ENCODE measurements at regions of chr7 and their contacts with region 1.

Region 1: DNA sequence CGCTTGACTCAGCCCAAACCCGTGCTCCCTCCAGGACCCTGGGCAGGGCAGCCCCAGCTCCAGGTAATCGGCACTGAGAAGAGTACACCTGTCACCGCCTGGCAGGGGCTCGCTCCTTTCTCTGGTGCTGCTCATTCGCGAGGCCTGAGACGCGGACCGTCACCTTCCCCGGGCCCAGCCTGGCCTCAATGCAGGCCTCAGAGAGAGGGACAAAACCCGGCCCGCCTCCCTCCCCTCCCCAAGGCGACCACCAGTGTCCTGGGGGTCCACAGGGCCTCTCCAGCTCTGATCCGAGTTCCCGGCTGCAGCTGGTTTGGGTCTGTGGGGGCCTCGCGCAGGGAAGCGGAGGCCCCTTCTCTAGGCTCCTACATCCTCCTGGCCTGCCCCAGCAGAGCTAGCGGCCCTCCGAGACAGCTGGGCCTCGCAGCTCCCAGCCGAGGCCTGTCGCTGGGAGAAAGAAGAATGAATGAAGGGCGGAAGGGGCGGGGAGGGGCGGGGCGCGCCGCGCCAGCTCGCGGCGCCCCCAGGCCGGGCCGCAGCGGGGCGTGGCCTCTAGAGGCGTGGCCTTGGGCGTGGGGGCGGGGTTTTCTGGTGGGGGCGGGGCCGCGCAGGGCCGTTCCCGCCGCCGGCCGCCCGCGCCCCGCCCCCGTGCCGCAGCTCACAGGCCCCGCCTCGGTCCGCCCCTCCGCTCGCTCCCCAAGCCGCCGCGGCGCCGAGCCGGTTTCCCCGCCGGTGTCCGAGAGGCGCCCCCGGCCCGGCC is at the start of gene LIMK1:
- DNase-seq: peak; percentile 74 to 87
- ATAC-seq: peak; percentile 84 to 97 (median 92)
- H3K4me3 ChIP-seq: peak within 1 kb of the TSS; percentile 50 to 95 (median 76)
- H3K27ac ChIP-seq: peak within 1 kb of the TSS in 7 of 10 donors; percentile 23 to 85 (median 56)
- H3K4me1 ChIP-seq: peaks cover 6 to 23% (median 20%) of the 10 kb centered on the region in 9 donors
- H3K27me3 ChIP-seq: no peaks in the 10 kb centered on the region
- CTCF ChIP-seq: no peak
- total RNA-seq, gene LIMK1: 6.1 to 17.3 (median 9.9) TPM

Region 2: DNA sequence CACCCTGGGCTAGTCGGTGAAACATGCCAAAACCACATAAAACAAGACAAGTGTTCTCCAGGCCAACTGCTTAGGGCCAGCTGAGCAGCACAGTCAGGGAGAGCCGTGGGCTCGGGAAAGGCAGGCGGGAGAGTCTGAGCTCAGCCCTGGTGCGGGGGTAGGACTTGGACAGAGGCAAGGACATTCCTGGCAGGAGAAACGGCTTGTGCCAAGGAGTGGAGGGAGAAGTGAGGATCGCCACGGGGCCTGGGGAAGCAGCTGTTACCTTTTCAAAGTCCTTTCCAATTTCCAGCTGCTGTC is 51.2 kb before region 1 on chr7:
- intact Hi-C with region 1: loop called in 1 of 10 experiments (anchors 5 kb)
- DNase-seq: no peak
- ATAC-seq: peak in 5 of 8 donors; percentile 3 to 26 (median 24)
- H3K4me3 ChIP-seq: peak overlapping the region in 2 of 10 donors; percentile 10 to 14
- H3K27ac ChIP-seq: peak overlapping the region in 8 of 10 donors; percentile 57 to 92 (median 82)
- H3K4me1 ChIP-seq: peaks cover 15 to 85% (median 38%) of the 10 kb centered on the region in 9 donors
- H3K27me3 ChIP-seq: peaks cover 0 to 37% (median 4%) of the 10 kb centered on the region in 7 donors
- CTCF ChIP-seq: no peak

Region 3: DNA sequence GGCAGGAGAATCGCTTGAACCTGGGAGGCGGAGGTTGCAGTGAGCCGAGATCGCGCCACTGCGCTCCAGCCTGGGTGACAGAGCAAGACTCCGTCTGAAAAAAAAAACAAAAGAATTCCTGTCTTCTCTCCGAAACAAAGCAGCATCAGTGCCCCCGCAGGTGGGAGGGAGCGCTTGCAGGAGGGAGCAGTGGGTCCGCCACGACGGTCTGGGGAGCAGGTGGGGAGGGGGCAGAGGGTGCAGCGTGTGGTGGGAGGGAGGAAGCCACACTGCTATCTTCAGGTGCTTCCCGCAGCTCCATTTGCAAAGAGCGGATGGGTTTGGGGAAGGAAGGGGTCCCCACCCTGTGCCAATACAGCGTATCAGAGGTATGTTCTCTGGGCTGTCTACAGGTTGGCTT is 32.0 kb after region 1 on chr7:
- intact Hi-C with region 1: no loop called
- DNase-seq: no peak
- ATAC-seq: peak in 1 of 8 donors; percentile 30
- H3K4me3 ChIP-seq: no peak overlapping the region
- H3K27ac ChIP-seq: no peak overlapping the region
- H3K4me1 ChIP-seq: no peaks in the 10 kb centered on the region
- H3K27me3 ChIP-seq: no peaks in the 10 kb centered on the region
- CTCF ChIP-seq: no peak

Region 4: GRCh38 chr7:74183613-74184450 is 100.5 kb after region 1 on chr7:
- intact Hi-C with region 1: loop called in 3 of 10 experiments (anchors 5 kb)
- DNase-seq: no peak
- ATAC-seq: peak in 2 of 8 donors; percentile 14 to 41
- H3K4me3 ChIP-seq: no peak overlapping the region
- H3K27ac ChIP-seq: peak overlapping the region in 2 of 10 donors; percentile 30 to 54
- H3K4me1 ChIP-seq: peaks cover 19 to 100% (median 95%) of the 10 kb centered on the region in 9 donors
- H3K27me3 ChIP-seq: no peaks in the 10 kb centered on the region
- CTCF ChIP-seq: peak in 5 of 9 donors; percentile 13 to 23 (median 20)

Measured in heart right ventricle (tissue), 16 donors.